Activated naive CD4-positive, alpha-beta T cell treated with anti-CD3 and anti-CD28 coated beads, Interleukin-2, amount 10 ng/mL, durations not matched to agents 7 days and 5 days (primary cell): ENCODE measurements at regions of chr11 and their contacts with region 1.

Region 1: DNA sequence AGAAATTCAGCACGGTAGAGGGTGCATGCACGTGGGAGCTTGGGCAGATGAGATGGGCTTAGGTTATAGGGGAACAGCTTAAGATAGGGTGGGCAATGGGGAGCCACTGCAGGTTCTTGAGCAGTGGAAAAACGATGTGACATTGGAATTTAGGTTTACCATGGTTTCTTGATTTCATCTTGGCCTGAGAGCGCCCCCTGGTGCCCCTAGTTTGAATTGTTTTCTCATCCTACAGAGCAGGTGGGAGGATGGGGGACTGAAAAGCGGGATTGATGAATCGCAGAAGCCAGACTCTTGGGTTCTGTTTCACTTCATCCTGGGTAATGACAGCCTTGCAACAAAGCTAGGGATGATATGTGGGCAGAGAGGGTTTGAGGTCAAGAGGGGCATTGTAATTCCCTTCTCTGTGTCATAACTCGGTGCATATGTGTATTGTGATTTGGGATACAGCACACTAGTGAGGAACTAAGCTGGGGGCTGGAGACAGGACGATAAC is 6.7 kb upstream of the MCAM start:
- DNase-seq: peak; percentile 88
- H3K4me3 Mint-ChIP-seq: no peak overlapping the region
- H3K27ac Mint-ChIP-seq: no peak overlapping the region
- H3K4me1 Mint-ChIP-seq: peaks cover 38% of the 10 kb centered on the region
- H3K27me3 Mint-ChIP-seq: peaks cover 35% of the 10 kb centered on the region

Region 2: DNA sequence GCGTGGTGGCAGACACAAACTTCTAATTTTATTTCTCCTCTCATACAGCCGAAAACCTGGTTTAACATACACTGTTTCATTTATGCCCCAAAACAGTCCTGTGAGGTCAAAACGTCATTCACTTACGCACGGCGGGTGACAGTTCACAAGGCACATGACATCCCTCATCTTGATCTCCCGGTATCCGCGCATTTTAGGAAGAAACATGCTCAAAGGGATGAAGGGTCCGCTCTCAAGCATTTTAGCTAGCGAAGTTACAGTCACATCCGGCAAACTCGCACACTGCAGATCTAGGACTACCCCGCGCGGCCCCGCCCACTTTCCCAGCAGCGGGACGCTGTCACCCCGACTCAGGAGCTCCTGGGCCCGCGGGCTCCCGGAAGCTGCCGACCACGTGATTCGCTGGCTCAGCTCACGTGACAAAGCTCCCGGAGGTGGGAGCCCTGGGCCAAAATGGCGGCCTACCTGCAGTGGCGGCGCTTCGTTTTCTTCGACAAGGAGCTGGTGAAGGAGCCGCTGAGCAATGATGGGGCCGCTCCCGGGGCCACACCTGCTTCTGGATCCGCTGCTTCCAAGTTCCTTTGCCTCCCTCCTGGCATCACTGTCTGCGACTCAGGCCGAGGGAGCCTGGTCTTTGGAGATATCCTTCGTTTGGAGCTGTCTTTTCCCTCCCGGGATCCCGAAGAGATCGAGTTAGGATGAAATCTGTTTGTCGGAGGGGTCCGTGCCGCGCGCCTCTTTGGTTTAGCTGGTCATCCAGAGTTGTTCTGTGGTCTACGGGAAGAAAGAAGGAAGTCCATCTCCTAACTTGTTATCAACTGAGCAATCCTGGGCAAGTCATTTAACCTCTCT is 256.0 kb before region 1 on chr11 and contains the start of gene VPS11:
- CTCF ChIA-PET with region 1: interaction called, 10 read pairs
- DNase-seq: peak; percentile 99
- H3K4me3 Mint-ChIP-seq: peak within 1 kb of the TSS; percentile 92
- H3K27ac Mint-ChIP-seq: peak within 1 kb of the TSS; percentile 98
- H3K4me1 Mint-ChIP-seq: peaks cover 49% of the 10 kb centered on the region
- H3K27me3 Mint-ChIP-seq: no peaks in the 10 kb centered on the region

Region 3: DNA sequence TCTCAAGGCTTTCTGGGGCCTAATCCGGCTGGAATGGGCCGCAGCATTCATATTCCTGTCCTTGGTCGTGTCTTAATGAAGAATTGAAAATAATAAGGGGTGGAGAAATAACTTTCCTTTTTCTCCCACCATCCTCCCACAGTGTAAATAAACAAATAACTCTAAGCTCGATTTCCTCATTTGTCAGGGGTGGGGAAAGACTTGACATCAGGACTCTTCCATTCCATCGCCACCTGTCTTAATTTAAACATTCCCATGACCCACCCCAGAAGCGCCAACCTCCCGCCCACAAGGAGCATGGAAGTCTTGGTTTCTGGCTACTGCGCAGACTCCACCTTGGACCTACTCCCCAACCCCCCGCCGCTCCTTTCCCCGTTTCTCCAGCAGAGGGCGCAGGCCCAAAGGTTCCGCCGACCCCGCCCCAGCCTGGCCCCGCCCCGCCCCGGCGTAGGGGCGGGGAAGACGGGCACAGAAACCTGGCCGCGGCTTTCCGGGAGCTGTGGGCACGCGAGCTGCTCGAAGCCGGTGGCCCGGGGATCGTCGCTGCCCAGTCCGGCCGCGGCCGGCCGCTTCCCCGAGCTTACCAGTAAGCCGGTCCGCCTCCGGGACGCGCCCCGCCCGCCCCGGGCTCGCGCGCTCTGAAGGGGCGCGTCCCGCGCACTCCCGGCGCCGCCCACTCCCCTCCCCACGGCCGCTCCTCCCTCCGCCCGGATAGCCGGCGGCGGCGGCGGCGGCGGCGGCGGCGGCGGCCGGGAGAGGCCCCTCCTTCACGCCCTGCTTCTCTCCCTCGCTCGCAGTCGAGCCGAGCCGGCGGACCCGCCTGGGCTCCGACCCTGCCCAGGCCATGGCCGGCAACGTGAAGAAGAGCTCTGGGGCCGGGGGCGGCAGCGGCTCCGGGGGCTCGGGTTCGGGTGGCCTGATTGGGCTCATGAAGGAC is 117.7 kb before region 1 on chr11 and contains the start of gene CBL:
- CTCF ChIA-PET with region 1: interaction called, 45 read pairs
- DNase-seq: peak; percentile 97
- H3K4me3 Mint-ChIP-seq: peak within 1 kb of the TSS; percentile 86
- H3K27ac Mint-ChIP-seq: peak within 1 kb of the TSS; percentile 88
- H3K4me1 Mint-ChIP-seq: peaks cover 31% of the 10 kb centered on the region
- H3K27me3 Mint-ChIP-seq: peaks cover 4% of the 10 kb centered on the region

Region 4: DNA sequence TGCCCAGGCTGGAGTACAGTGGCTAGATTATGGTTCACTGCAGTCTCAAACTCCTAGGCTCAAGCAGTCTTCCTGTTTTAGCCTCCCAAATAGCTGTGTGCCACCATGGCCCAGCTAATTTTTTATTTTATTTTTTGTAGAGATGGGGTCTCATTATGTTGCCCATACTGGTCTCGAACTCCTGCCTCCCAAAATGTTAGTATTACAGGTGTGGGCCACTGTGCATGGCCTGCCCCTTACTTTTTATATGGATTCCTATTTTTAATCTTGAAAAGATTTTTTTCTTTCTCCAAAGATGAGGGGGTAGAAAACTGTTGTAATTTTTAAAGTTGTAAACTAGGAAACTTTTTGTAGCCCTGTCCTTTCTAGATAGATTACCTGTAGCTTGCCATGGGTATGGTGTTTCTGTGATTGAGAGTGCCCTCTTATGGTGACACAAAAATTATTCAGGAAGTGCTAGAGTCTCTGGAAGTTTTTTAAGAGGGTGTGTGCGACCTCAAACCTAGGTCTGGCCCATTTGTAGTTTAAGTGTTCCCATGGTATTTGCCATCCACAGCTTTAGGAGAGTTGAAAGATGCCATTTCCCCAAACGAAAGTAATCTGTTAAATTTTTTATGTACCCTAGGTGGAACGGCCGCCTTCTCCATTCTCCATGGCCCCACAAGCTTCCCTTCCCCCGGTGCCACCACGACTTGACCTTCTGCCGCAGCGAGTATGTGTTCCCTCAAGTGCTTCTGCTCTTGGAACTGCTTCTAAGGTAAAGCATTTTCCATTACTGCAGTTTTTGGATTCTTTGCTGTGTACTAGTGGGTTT is 39.0 kb before region 1 on chr11:
- CTCF ChIA-PET with region 1: interaction called, 28 read pairs
- DNase-seq: peak; percentile 27
- H3K4me3 Mint-ChIP-seq: no peak overlapping the region
- H3K27ac Mint-ChIP-seq: peak overlapping the region; percentile 12
- H3K4me1 Mint-ChIP-seq: peaks cover 23% of the 10 kb centered on the region
- H3K27me3 Mint-ChIP-seq: no peaks in the 10 kb centered on the region

Region 5: DNA sequence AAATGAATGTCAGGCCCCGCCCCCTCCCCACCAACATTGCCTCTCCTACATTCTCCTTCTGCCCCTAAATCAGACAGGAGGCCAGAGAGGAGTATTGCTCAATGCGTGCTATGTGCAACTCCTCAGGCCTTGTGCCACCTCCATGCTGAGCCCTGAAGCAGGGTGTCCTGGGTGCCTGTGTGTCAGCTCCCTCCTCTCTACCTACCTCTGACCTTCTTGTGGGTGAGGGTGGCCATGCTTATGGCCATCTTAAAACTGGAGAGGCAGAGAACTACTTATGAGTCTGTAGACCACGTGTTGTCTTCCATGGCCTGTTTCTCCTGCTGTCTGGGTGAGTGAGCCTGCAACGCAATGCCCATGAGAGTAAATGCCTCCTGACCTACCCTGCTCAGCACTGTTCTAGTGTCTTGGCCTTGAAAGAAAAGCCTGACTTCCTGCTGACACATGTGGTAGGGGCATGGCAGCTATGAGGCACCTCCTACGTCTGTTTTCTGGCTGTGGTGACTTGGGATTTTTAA is 17.2 kb before region 1 on chr11:
- CTCF ChIA-PET with region 1: interaction called, 83 read pairs
- DNase-seq: peak; percentile 46
- H3K4me3 Mint-ChIP-seq: no peak overlapping the region
- H3K27ac Mint-ChIP-seq: peak overlapping the region; percentile 83
- H3K4me1 Mint-ChIP-seq: peaks cover 32% of the 10 kb centered on the region
- H3K27me3 Mint-ChIP-seq: peaks cover 6% of the 10 kb centered on the region

Region 6: GRCh38 chr11:119347242-119347641 is 23.7 kb after region 1 on chr11:
- CTCF ChIA-PET with region 1: interaction called, 15 read pairs
- DNase-seq: no peak
- H3K4me3 Mint-ChIP-seq: no peak overlapping the region
- H3K27ac Mint-ChIP-seq: no peak overlapping the region
- H3K4me1 Mint-ChIP-seq: peaks cover 12% of the 10 kb centered on the region
- H3K27me3 Mint-ChIP-seq: peaks cover 83% of the 10 kb centered on the region